ENCODE measurements at regions of chr12 and their contacts with region 1.

Region 1: GRCh38 chr12:107242189-107242588 is 148.8 kb upstream of the CRY1 start:
- DNase-seq: peak; percentile 66
- H3K4me3 ChIP-seq: no peak overlapping the region
- H3K27ac ChIP-seq: no peak overlapping the region
- H3K4me1 ChIP-seq: peaks cover 30% of the 10 kb centered on the region
- H3K27me3 ChIP-seq: no peaks in the 10 kb centered on the region
- CTCF ChIP-seq: no peak

Region 2: GRCh38 chr12:107277855-107278254 is 35.7 kb after region 1 on chr12:
- CTCF ChIA-PET with region 1: no interaction called
- POLR2A ChIA-PET with region 1: no interaction called
- intact Hi-C with region 1: loop called (anchors 5 kb)
- DNase-seq: peak; percentile 92
- H3K4me3 ChIP-seq: no peak overlapping the region
- H3K27ac ChIP-seq: peak overlapping the region; percentile 37
- H3K4me1 ChIP-seq: peaks cover 16% of the 10 kb centered on the region
- H3K27me3 ChIP-seq: no peaks in the 10 kb centered on the region
- CTCF ChIP-seq: no peak